ENCODE measurements at regions of chr14 and their contacts with region 1.

Region 1: GRCh38 chr14:61456720-61457119 is 135.3 kb downstream of the PRKCH start:
- DNase-seq: peak; percentile 87 to 88
- ATAC-seq: peak; percentile 85
- H3K4me3 ChIP-seq: no peak overlapping the region
- H3K27ac ChIP-seq: no peak overlapping the region
- H3K4me1 ChIP-seq: no peaks in the 10 kb centered on the region
- H3K27me3 ChIP-seq: no peaks in the 10 kb centered on the region

Region 2: GRCh38 chr14:60705100-60705499 is 751.6 kb before region 1 on chr14:
- intact Hi-C with region 1: no loop called
- DNase-seq: no peak
- ATAC-seq: no peak
- H3K4me3 ChIP-seq: no peak overlapping the region
- H3K27ac ChIP-seq: no peak overlapping the region
- H3K4me1 ChIP-seq: no peaks in the 10 kb centered on the region
- H3K27me3 ChIP-seq: no peaks in the 10 kb centered on the region

Region 3: DNA sequence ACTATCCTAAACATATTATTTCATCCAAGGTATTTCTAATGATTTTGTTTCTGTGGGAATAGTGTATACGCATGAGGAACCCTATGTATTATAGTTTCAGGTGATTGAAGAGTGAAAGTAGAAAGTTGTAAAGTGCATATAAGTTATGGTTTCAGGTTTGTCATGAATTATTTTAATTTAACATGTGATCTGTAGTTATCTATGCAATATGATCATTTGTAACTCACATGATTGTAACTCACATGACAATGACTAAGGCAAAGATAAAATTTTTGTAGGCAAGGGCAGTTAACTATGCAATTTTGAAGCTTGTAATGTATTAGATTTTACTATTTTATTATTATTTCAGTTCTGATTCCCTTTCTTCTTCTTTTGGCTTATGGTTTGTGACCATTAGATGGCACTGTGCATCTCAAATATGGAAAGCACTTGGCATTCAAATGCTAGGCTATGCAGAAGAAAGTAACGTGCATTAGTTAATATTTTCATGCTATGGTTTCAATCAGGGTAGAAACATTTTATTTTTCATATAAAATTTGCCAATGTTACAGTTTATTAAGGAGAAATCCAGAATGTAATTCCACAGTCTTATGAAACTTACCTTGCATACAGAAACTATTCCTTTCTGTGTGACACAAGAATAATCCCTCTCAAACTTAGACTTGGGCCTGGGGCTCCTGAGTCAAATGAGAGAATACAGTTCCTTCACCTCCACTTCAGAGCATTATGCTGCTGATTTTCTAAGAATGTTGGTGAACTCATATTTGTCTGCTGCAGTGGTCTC is 159.8 kb before region 1 on chr14:
- intact Hi-C with region 1: loop called in 1 of 2 experiments (anchors 10 kb)
- DNase-seq: no peak
- ATAC-seq: peak; percentile 76
- H3K4me3 ChIP-seq: no peak overlapping the region
- H3K27ac ChIP-seq: no peak overlapping the region
- H3K4me1 ChIP-seq: no peaks in the 10 kb centered on the region
- H3K27me3 ChIP-seq: no peaks in the 10 kb centered on the region

Region 4: DNA sequence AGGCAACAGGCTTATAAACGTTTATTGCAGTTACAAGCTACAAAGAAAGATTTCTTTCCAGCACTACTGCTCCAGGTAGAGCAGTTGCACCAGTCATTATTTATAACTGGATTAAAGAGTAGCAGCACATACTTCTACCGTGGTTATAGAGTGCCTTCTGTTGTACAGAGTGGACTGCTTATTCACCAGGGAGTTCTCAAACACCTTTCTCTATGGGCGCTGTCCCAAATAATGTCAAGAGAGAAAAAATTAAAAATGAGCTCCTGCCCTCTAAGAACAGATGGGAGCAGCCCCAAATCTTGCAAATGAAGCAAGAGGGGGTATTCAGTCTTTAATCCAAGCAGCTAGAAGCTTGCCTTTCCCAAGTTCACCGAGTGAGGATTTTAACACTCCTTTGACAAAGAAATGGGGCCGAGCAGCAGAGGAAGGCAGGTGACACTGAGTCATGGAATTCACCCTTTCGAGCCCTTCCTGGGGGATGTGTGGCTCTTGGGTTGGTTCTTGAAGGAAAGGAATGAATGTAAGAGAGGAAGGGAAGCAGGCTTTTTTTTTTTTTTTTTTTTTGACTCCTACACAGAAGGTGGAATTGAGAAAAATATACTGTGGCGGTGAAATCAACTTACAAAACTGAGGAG is 45.9 kb after region 1 on chr14:
- intact Hi-C with region 1: no loop called
- DNase-seq: no peak
- ATAC-seq: no peak
- H3K4me3 ChIP-seq: no peak overlapping the region
- H3K27ac ChIP-seq: peak overlapping the region in 1 of 2 donors; percentile 45
- H3K4me1 ChIP-seq: peaks cover 4 to 8% of the 10 kb centered on the region in 2 donors
- H3K27me3 ChIP-seq: no peaks in the 10 kb centered on the region

Region 5: GRCh38 chr14:61837336-61838229 is 380.9 kb after region 1 on chr14:
- intact Hi-C with region 1: loop called in 1 of 2 experiments (anchors 2 kb)
- DNase-seq: peak; percentile 81 to 87
- ATAC-seq: peak; percentile 93
- H3K4me3 ChIP-seq: no peak overlapping the region
- H3K27ac ChIP-seq: no peak overlapping the region
- H3K4me1 ChIP-seq: no peaks in the 10 kb centered on the region
- H3K27me3 ChIP-seq: no peaks in the 10 kb centered on the region

Region 6: DNA sequence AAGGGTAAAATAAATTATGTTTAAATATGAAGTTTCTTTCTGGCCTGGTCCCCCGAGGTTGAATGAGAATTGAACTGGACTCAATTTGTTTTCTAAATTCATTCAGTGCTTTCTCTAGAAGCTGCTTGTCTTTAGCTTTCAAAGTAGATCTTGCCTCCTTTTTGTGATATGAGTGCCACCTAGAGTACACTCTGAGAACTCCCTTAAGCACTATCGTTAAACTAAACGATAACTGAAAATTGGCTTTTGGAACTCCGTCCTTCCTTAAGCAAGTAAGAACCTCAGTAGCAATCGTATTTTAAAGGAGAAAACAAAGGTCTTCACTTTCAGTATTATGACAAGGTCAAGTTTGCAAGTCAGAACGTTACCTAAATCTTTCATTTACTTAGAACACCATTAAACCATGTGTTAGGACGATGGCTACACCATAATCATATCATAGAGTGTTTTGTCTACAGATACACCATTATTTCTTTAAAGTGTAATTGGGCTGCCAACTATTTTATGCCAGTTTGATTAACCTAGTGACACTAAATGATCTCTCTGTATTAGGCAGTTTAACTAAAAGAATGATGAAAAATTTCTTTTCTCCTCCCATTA is 670.3 kb after region 1 on chr14:
- intact Hi-C with region 1: loop called (anchors 5 to 10 kb)
- DNase-seq: no peak
- ATAC-seq: no peak
- H3K4me3 ChIP-seq: no peak overlapping the region
- H3K27ac ChIP-seq: no peak overlapping the region
- H3K4me1 ChIP-seq: no peaks in the 10 kb centered on the region
- H3K27me3 ChIP-seq: no peaks in the 10 kb centered on the region

Measured in aorta (tissue), 5 donors.